Mammary epithelial cell (primary cell): ENCODE measurements at regions of chr2 and their contacts with region 1.

Region 1: DNA sequence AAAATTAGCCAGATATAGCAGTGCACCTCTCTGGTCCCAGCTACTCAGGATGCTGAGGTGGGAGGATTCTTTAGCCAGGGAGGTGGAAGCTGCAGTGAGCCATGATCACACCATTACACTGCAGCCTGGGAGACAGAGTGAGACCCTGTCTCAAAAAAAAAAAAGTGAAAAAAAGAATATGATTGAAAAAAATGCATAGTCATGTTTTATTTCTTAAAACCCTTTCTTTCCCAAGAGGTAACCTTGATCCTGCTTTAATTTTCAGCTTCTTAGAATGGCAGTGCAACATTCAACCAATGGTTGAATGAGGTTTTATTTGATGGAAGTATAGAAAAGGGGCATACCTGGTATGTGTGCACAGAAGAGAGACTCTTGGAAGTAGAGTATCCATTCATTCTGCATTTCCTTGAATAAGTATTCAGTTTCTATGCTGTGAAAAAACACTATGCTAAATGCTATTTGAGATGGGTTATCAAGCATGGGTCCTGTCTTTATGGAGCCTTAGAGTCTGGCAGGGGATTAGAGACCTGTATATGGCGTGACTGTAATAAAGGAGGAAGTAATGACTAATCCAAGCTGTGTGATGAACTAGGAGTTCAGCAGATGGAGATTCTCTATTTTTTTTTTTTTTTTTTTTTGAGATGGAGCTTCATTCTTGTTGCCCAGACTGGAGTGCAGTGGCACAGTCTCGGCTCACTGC is 146.3 kb downstream of the WDSUB1 start:
- DNase-seq: no peak
- H3K4me3 ChIP-seq: no peak overlapping the region
- H3K27ac ChIP-seq: no peak overlapping the region
- H3K4me1 ChIP-seq: peaks cover 40% of the 10 kb centered on the region
- H3K27me3 ChIP-seq: no peaks in the 10 kb centered on the region
- CTCF ChIP-seq: no peak

Region 2: DNA sequence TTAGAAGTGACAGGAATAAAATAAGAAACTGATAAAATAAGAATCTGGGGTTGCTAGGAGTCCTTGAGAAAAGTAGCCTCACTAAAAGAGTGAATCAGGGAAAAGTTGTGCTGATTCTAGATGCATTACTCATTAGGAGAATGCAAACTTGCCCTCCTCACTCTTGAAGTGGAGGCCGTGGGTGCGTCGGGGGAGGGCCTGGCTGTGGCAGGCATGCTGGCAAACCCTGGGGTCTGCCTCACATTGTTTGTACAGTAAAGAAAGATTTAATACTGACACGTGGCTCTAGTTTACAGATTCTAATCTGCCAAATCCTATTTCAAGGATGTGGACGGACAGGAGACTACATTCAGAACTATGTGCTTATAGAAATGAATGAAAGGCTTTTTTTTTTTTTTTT is 129.9 kb before region 1 on chr2:
- CTCF ChIA-PET with region 1: interaction called, 12 read pairs
- dilution Hi-C with region 1: no loop called
- in situ Hi-C with region 1: no loop called
- intact Hi-C with region 1: no loop called
- DNase-seq: peak; percentile 19
- H3K4me3 ChIP-seq: no peak overlapping the region
- H3K27ac ChIP-seq: no peak overlapping the region
- H3K4me1 ChIP-seq: peaks cover 4% of the 10 kb centered on the region
- H3K27me3 ChIP-seq: no peaks in the 10 kb centered on the region
- CTCF ChIP-seq: no peak

Region 3: DNA sequence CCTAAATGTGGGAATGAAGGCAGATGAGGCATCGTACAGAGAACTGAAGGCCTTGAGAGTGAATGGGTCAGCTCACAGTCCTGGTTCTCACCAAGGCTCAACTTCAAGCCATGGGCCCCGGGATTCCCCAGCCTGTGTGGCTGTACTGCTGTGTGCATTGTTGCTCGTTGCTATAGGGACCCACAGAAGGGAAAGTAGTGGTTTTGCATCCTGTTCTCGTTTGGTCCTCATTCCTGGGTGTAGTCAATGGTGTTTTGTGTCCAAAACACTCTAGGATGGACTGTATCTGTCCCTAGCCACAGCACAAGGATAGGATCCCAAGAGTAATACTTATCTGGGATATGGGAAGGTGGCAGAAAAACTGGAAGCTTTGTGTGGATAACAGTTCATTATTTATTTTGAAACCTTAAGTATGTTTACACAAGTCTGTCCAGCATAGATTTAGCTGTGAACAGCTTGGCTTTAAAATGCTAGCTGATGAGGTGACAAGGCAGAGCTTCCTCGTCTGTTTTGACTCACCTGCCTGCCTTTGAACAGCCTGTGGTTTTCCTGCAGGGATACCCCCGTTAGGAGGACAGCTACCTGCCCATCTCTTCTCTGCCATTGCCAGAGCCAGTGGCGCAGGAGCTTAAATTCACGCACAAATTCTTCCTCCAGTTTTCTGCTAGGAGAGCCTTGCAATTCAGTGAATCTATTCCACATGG is 61.3 kb after region 1 on chr2:
- CTCF ChIA-PET with region 1: no interaction called
- dilution Hi-C with region 1: no loop called
- in situ Hi-C with region 1: no loop called
- intact Hi-C with region 1: no loop called
- DNase-seq: no peak
- H3K4me3 ChIP-seq: no peak overlapping the region
- H3K27ac ChIP-seq: no peak overlapping the region
- H3K4me1 ChIP-seq: no peaks in the 10 kb centered on the region
- H3K27me3 ChIP-seq: no peaks in the 10 kb centered on the region
- CTCF ChIP-seq: no peak

Region 4: GRCh38 chr2:159317392-159318088 is 177.3 kb after region 1 on chr2:
- CTCF ChIA-PET with region 1: no interaction called
- dilution Hi-C with region 1: no loop called
- in situ Hi-C with region 1: no loop called
- intact Hi-C with region 1: no loop called
- DNase-seq: no peak
- H3K4me3 ChIP-seq: no peak overlapping the region
- H3K27ac ChIP-seq: no peak overlapping the region
- H3K4me1 ChIP-seq: no peaks in the 10 kb centered on the region
- H3K27me3 ChIP-seq: no peaks in the 10 kb centered on the region
- CTCF ChIP-seq: no peak